Heart right ventricle (tissue), 16 donors: ENCODE measurements at regions of chr20 and their contacts with region 1.

Region 1: GRCh38 chr20:63163596-63164455 is 52.1 kb downstream of the YTHDF1 start:
- DNase-seq: peak in 1 of 2 donors; percentile 2
- ATAC-seq: no peak
- H3K4me3 ChIP-seq: no peak overlapping the region
- H3K27ac ChIP-seq: no peak overlapping the region
- H3K4me1 ChIP-seq: no peaks in the 10 kb centered on the region
- H3K27me3 ChIP-seq: peaks cover 0 to 66% (median 36%) of the 10 kb centered on the region in 7 donors
- CTCF ChIP-seq: no peak

Region 2: GRCh38 chr20:63114672-63115476 is 49.0 kb before region 1 on chr20:
- intact Hi-C with region 1: loop called in 1 of 10 experiments (anchors 5 kb)
- DNase-seq: peak in 1 of 2 donors; percentile 1
- ATAC-seq: no peak
- H3K4me3 ChIP-seq: no peak overlapping the region
- H3K27ac ChIP-seq: no peak overlapping the region
- H3K4me1 ChIP-seq: no peaks in the 10 kb centered on the region
- H3K27me3 ChIP-seq: peaks cover 0 to 64% (median 35%) of the 10 kb centered on the region in 7 donors
- CTCF ChIP-seq: no peak

Region 3: GRCh38 chr20:63602321-63602720 is 438.5 kb after region 1 on chr20:
- intact Hi-C with region 1: no loop called
- DNase-seq: no peak
- ATAC-seq: no peak
- H3K4me3 ChIP-seq: no peak overlapping the region
- H3K27ac ChIP-seq: no peak overlapping the region
- H3K4me1 ChIP-seq: peaks cover 0 to 7% (median 0%) of the 10 kb centered on the region in 9 donors
- H3K27me3 ChIP-seq: no peaks in the 10 kb centered on the region
- CTCF ChIP-seq: no peak